Transverse colon (tissue), 4 donors: ENCODE measurements at regions of chr13 and their contacts with region 1.

Region 1: GRCh38 chr13:29023700-29024099 is 203.6 kb downstream of the MTUS2 start:
- DNase-seq: no peak
- H3K4me3 ChIP-seq: no peak overlapping the region
- H3K27ac ChIP-seq: no peak overlapping the region
- H3K4me1 ChIP-seq: no peaks in the 10 kb centered on the region
- H3K27me3 ChIP-seq: no peaks in the 10 kb centered on the region
- CTCF ChIP-seq: no peak
- EP300 ChIP-seq: no peak
- POLR2A ChIP-seq: no peak

Region 2: DNA sequence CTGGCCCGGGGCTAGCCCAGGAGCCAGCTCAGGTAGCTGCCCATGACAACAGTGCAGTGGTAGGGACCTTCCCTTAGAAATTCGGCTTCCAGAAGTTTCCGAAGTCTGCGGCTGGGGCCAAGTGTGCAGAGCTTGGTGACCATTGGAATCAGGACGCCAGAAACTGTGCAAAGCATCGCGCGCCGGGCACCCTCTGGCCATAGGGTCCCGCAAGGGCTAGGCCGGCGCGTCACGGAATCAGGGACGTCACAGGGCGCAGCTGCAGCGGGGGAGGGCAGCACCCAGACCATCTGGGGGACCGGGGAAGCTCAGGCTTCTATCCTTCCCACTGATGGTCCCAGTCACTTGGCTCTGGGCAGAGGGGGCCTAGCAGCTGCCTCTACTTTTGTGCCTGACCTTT is 15.5 kb after region 1 on chr13:
- in situ Hi-C with region 1: no loop called
- intact Hi-C with region 1: loop called (anchors 1 kb)
- DNase-seq: no peak
- H3K4me3 ChIP-seq: no peak overlapping the region
- H3K27ac ChIP-seq: no peak overlapping the region
- H3K4me1 ChIP-seq: no peaks in the 10 kb centered on the region
- H3K27me3 ChIP-seq: no peaks in the 10 kb centered on the region
- CTCF ChIP-seq: no peak
- EP300 ChIP-seq: no peak
- POLR2A ChIP-seq: no peak

Region 3: DNA sequence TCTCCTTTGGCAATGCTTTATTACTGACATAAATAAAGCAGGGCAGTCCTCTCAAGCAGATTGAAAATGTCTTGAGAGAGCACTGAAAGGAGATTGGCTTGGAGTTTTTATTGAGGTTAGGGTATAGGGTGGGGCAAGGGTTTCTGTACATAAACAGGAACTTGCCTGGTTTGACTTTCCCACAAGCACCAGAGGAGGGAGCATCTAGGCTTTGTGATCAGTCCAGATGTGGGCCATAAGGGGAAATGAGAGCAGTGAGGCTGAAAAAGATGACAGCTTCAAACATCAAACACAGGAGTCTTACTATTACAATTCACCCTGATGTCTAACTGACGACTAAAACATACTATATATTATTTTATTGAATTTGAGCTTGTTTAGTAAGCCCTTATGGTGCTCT is 57.3 kb after region 1 on chr13:
- in situ Hi-C with region 1: no loop called
- intact Hi-C with region 1: no loop called
- DNase-seq: no peak
- H3K4me3 ChIP-seq: no peak overlapping the region
- H3K27ac ChIP-seq: no peak overlapping the region
- H3K4me1 ChIP-seq: no peaks in the 10 kb centered on the region
- H3K27me3 ChIP-seq: no peaks in the 10 kb centered on the region
- CTCF ChIP-seq: no peak
- EP300 ChIP-seq: no peak
- POLR2A ChIP-seq: no peak